ENCODE measurements at regions of chr22 and their contacts with region 1.

Region 1: GRCh38 chr22:39777716-39778454 is 115.7 kb downstream of the ENTHD1 start:
- DNase-seq: no peak
- H3K4me3 Mint-ChIP-seq: no peak overlapping the region
- H3K27ac Mint-ChIP-seq: no peak overlapping the region
- H3K4me1 Mint-ChIP-seq: peaks cover 38% of the 10 kb centered on the region
- H3K27me3 Mint-ChIP-seq: no peaks in the 10 kb centered on the region

Region 2: DNA sequence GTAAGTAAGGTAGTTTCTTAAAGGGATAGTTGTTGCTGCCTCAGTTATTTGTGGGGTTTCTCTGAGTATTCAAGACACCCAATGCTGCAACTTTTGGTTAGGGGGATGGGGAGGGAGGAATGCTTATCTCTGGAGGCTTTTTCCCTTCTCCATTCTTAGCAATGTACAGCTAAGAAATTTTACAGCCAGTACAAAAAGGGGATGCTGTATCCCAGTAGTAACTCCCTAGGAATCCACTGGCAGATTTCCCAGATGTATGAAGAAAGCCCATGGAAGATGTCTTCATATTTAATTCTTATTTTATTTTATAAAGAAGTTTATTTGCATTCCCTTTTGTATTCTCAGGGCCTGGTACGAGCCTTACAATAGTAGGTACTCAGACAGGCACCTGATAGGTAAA is 39.1 kb before region 1 on chr22:
- CTCF ChIA-PET with region 1: no interaction called
- intact Hi-C with region 1: loop called (anchors 1 kb)
- DNase-seq: no peak
- H3K4me3 Mint-ChIP-seq: no peak overlapping the region
- H3K27ac Mint-ChIP-seq: no peak overlapping the region
- H3K4me1 Mint-ChIP-seq: no peaks in the 10 kb centered on the region
- H3K27me3 Mint-ChIP-seq: no peaks in the 10 kb centered on the region

Region 3: DNA sequence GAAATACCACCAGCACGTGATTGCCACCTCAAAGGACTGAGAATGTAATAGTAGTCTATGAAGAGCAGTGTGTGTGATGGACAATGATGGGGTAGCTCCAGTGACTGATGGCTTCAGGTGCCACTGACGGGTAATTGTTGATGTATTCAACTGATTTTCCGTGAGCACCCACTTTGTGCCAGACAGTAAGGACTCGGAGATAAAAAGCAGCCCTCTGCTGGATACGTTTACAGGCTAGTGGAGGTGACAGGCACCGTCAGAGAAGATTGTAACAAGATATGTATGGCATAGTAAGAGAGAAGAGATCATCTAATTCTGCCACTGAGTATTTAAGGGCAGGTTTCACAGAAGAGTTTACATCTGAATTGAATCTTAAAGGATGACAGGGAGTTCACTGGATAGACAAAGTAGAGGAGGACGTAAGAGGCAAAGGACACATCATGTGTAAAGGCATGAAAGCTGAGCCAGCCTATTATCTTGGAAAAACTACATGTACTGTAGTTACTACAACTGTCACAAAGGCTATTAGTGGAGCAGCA is 116.7 kb after region 1 on chr22:
- CTCF ChIA-PET with region 1: no interaction called
- intact Hi-C with region 1: no loop called
- DNase-seq: no peak
- H3K4me3 Mint-ChIP-seq: no peak overlapping the region
- H3K27ac Mint-ChIP-seq: no peak overlapping the region
- H3K4me1 Mint-ChIP-seq: peaks cover 15% of the 10 kb centered on the region
- H3K27me3 Mint-ChIP-seq: no peaks in the 10 kb centered on the region

Measured in activated naive CD4-positive, alpha-beta T cell treated with anti-CD3 and anti-CD28 coated beads for 36 hours (primary cell).